HEK293 (cell line): ENCODE measurements at regions of chr11 and their contacts with region 1.

Region 1: GRCh38 chr11:108008656-108009496 is at the start of gene CUL5:
- H3K4me3 ChIP-seq: peak within 1 kb of the TSS; percentile 90
- H3K27ac ChIP-seq: peak within 1 kb of the TSS; percentile 93
- H3K4me1 ChIP-seq: no peaks in the 10 kb centered on the region
- CTCF ChIP-seq: peak; percentile 82

Region 2: DNA sequence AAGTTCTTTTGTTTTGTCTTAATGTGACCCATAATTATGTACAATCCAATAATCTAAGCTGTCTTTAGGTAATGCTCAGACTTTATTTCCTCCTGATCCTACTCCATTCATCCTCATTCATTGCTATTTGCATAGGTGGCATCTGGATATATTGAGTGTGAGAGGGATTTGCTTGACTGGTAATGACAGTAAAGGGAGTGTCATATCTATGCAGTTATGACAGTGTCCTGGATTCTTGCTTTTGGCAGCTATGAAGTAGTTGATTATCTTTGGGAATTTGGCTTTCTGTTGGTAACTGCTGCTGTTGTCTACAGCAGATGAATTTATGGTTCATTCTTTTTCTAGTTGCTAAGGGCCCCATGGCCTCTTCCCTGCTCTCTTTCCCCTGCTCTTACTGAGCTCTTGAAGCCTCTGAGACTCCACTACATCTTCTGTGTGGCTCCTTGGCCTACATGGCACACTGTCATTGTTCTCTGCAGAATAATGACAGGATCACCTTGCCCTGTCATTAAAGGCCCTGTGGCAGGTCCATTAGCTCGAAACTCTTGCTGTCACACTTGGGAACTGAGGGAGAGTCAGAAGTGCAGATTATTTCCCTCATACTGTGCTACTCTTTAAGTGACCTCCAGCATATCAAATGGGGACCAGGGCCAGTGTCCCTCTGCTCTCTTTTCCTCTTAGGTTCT is 92.4 kb after region 1 on chr11:
- CTCF ChIA-PET with region 1: no interaction called
- POLR2A ChIA-PET with region 1: no interaction called
- H3K4me3 ChIP-seq: no peak overlapping the region
- H3K27ac ChIP-seq: no peak overlapping the region
- H3K4me1 ChIP-seq: no peaks in the 10 kb centered on the region
- CTCF ChIP-seq: no peak

Region 3: GRCh38 chr11:108121274-108122155 is 112.6 kb after region 1 on chr11 and contains the start of gene ACAT1:
- CTCF ChIA-PET with region 1: interaction called, 11 read pairs
- POLR2A ChIA-PET with region 1: no interaction called
- H3K4me3 ChIP-seq: peak within 1 kb of the TSS; percentile 86
- H3K27ac ChIP-seq: peak within 1 kb of the TSS; percentile 75; the same call in 1 of the 2 replicates
- H3K4me1 ChIP-seq: no peaks in the 10 kb centered on the region
- CTCF ChIP-seq: peak; percentile 79